Naive thymus-derived CD4-positive, alpha-beta T cell (primary cell): ENCODE measurements at regions of chr1 and their contacts with region 1.

Region 1: GRCh38 chr1:20165522-20165951 is 20.4 kb upstream of the UBXN10 start:
- DNase-seq: no peak
- ATAC-seq: no peak
- H3K4me3 ChIP-seq: no peak overlapping the region
- H3K4me3 Mint-ChIP-seq: no peak overlapping the region
- H3K27ac ChIP-seq: no peak overlapping the region
- H3K27ac Mint-ChIP-seq: no peak overlapping the region
- H3K4me1 ChIP-seq: no peaks in the 10 kb centered on the region
- H3K4me1 Mint-ChIP-seq: peaks cover 0 to 7% (median 0%) of the 10 kb centered on the region in 7 donors
- H3K27me3 ChIP-seq: no peaks in the 10 kb centered on the region
- H3K27me3 Mint-ChIP-seq: peaks cover 0 to 9% (median 4%) of the 10 kb centered on the region in 5 donors

Region 2: DNA sequence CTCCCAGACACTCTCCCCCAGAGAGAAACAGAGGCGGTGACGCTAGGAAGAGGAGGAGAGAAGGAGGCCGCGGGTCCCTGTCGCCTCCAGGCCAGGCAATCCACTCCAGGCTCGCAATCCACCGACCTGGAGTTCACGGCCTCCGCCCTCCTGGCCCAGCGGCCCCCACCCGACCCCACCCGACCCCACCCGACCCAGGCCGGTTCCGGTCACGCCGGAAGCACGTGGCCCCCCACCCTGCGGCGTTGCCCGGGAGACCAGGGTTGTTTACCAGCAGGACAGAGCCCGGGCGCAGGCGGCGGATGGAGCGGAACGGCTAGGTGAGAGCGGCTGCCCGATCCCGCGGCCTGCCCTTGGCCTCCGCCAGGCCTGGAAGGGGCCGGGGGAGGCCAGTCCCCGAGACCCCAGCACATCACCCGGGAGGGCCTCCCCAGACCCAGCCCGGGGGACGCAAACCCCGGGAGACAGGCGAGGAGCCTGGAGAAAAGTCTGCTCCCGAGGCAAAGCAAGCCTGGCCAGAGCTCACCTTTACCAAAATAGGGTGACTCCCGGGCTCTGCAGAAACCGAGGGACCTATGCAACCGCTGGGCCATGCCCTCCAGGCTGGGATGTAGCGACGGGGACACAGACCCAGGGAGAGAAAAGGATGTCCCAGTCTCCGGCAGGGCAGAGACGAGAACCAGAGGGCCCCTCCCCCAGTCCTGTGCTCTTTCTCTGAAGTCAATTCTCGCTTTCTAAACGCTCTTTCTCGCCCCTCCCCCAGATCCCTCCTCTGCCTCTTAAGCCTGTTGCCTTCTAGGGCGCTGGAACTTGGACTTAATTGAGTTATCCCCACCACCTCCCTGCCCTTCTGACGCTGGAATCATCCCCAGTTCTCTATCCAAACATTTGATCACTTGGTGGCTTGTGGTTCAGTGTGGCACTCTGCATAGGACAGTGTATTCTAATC is 20.6 kb after region 1 on chr1 and contains the starts of genes PLA2G2C and UBXN10:
- CTCF ChIA-PET with region 1: no interaction called
- POLR2A ChIA-PET with region 1: no interaction called
- intact Hi-C with region 1: loop called in 1 of 2 experiments (anchors 2 kb)
- DNase-seq: peak; percentile 19 to 73 (median 49)
- ATAC-seq: peak; percentile 53
- H3K4me3 ChIP-seq: peak within 1 kb of the TSS; percentile 68
- H3K4me3 Mint-ChIP-seq: peak within 1 kb of the TSS; percentile 80 to 91 (median 88)
- H3K27ac ChIP-seq: peak within 1 kb of the TSS; percentile 40
- H3K27ac Mint-ChIP-seq: peak within 1 kb of the TSS; percentile 80 to 90 (median 87)
- H3K4me1 ChIP-seq: peaks cover 19 to 41% of the 10 kb centered on the region in 2 donors
- H3K4me1 Mint-ChIP-seq: peaks cover 42 to 56% (median 56%) of the 10 kb centered on the region in 7 donors
- H3K27me3 ChIP-seq: no peaks in the 10 kb centered on the region
- H3K27me3 Mint-ChIP-seq: peaks cover 0 to 14% (median 0%) of the 10 kb centered on the region in 5 donors
- total RNA-seq, gene PLA2G2C: 0.46 TPM in 1 of 5 experiments, not detected in the others
- total RNA-seq, gene UBXN10: 0.37 to 1.1 (median 0.73) TPM in 3 of 5 experiments, not detected in the others